ENCODE measurements at regions of chr6 and their contacts with region 1.

Region 1: DNA sequence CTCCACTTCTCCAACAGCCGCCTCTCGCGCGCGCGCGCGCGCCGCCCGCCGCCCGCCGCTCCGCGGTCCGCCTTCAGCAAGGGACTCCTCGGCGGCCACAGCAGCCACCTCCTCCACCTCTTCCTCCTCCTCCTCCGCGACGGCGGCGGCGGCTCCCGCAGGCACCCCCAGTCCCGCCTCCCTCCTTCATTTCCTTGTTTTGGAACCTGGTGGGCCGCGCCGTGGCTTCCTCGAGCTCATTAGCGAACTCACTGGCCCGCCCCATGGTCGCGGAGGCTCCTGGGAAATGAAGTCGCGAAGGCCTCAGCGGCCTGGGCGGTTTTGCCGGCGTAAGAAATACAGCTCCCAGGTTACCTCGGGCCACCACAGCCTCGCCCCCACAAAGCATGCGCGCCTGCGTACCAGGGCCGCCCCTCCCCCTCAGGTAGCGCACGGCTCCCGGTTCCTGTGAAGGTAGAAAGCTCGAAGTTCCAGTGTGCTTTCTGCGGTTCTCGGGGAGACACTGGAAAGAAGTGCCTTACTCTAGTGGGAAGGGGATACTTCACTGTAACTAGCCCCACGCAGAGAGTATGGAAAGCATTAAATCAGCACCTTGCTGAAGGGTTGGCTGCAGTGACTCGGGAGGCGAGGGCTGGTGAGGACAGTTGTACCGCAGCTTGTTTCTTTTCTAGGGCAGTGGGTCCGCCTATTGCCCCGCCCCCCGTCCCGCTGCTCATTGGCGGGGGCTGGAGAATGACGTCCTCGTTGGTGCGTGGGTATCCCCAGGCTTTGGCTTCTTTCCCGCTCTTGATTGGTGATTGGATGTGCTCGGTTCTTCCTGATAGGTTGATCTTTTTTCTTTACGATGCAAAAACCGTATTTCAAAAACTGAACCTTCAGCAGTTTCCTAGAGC is at the start of gene CDK19:
- DNase-seq: peak; percentile 97 to 98
- H3K4me3 ChIP-seq: peak within 1 kb of the TSS; percentile 99
- H3K4me3 Mint-ChIP-seq: peak within 1 kb of the TSS; percentile 100
- H3K27ac Mint-ChIP-seq: peak within 1 kb of the TSS; percentile 100
- H3K4me1 ChIP-seq: peaks cover 14% of the 10 kb centered on the region; the same call in 1 of the 2 replicates
- H3K4me1 Mint-ChIP-seq: peaks cover 20% of the 10 kb centered on the region
- H3K27me3 ChIP-seq: no peaks in the 10 kb centered on the region
- H3K27me3 Mint-ChIP-seq: no peaks in the 10 kb centered on the region
- CTCF ChIP-seq: no peak
- total RNA-seq, gene CDK19: 23.1 and 24.6 TPM in 2 replicates

Region 2: DNA sequence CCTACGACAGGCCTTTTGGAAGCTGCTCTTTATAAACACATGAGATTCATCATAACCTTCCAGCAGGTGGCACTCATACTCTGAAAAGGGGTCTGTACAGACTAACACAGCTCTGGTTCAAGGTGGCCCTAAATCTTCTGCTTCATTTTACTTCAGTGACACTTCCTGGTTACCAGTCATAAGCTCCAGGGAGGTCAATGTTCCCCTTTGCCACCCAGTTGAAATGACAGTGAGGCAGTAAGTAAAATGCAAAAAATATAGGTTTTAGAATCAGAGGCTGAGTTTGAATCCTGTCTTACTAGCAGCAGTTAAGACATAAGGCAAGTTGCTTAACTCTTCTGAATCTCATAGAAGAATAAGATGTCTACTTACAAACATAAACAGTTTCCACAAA is 133.0 kb before region 1 on chr6:
- CTCF ChIA-PET with region 1: interaction called, 10 read pairs
- POLR2A ChIA-PET with region 1: interaction called, 10 read pairs
- intact Hi-C with region 1: loop called (anchors 5 kb)
- DNase-seq: peak; percentile 71 to 77
- H3K4me3 ChIP-seq: no peak overlapping the region
- H3K4me3 Mint-ChIP-seq: no peak overlapping the region
- H3K27ac Mint-ChIP-seq: peak overlapping the region; percentile 72
- H3K4me1 ChIP-seq: peaks cover 14% of the 10 kb centered on the region
- H3K4me1 Mint-ChIP-seq: peaks cover 12% of the 10 kb centered on the region
- H3K27me3 ChIP-seq: no peaks in the 10 kb centered on the region
- H3K27me3 Mint-ChIP-seq: no peaks in the 10 kb centered on the region
- CTCF ChIP-seq: peak; percentile 68 to 69

Region 3: GRCh38 chr6:110826236-110827129 is 11.0 kb after region 1 on chr6:
- CTCF ChIA-PET with region 1: no interaction called
- POLR2A ChIA-PET with region 1: interaction called, 11 read pairs
- intact Hi-C with region 1: no loop called
- DNase-seq: peak; percentile 36 to 38
- H3K4me3 ChIP-seq: no peak overlapping the region
- H3K4me3 Mint-ChIP-seq: no peak overlapping the region
- H3K27ac Mint-ChIP-seq: peak overlapping the region; percentile 42
- H3K4me1 ChIP-seq: peaks cover 27% of the 10 kb centered on the region
- H3K4me1 Mint-ChIP-seq: peaks cover 16% of the 10 kb centered on the region
- H3K27me3 ChIP-seq: no peaks in the 10 kb centered on the region
- H3K27me3 Mint-ChIP-seq: no peaks in the 10 kb centered on the region
- CTCF ChIP-seq: no peak

Region 4: DNA sequence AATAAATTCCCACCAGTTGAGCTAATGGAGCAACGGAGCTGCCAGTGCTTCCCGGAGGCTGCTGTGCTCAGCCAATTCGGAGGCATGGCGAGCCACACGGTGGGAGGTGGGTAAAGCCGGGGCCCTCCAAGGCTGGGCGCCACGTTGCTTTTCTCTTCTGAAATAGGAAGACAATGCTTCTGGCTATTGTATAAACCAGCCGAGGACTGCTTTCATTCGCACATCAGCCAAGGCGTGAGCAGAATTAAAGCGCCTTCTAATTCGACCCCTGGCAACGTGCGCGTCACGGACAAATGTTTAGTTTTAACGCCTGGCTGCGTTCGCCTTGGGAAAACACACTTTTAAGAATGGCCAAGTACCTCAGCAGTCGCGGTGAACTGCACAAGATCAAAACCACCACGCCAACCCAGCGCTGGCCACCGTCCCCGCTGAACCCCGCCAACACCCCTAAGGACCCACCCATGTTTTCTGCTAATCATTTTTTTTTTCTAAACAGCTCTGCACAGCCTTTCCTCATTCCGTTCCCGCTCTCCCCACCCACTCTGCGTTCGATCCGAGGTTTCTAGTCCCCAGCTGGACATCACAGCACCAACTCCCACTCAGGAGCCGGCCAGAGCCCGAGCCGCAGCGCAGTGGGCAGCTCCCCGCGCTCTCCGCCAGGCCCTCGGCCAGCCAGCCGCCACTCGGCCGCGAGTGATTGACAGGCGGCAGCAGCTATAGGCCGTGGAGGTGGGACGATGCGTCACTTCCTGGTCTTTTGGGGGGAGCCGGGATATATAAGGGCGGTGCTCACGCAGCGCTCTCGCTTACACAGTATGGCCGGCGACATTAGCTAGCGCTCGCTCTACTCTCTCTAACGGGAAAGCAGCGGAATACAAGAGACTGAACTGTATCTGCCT is 58.8 kb after region 1 on chr6 and contains the start of gene AMD1:
- CTCF ChIA-PET with region 1: interaction called, 7 read pairs
- POLR2A ChIA-PET with region 1: interaction called, 200 read pairs
- intact Hi-C with region 1: loop called (anchors 1 kb)
- DNase-seq: peak; percentile 97
- H3K4me3 ChIP-seq: peak within 1 kb of the TSS; percentile 93
- H3K4me3 Mint-ChIP-seq: peak within 1 kb of the TSS; percentile 98
- H3K27ac Mint-ChIP-seq: peak within 1 kb of the TSS; percentile 95
- H3K4me1 ChIP-seq: peaks cover 33% of the 10 kb centered on the region
- H3K4me1 Mint-ChIP-seq: peaks cover 18% of the 10 kb centered on the region
- H3K27me3 ChIP-seq: no peaks in the 10 kb centered on the region
- H3K27me3 Mint-ChIP-seq: no peaks in the 10 kb centered on the region
- CTCF ChIP-seq: no peak
- total RNA-seq, gene AMD1: 84.0 and 90.0 TPM in 2 replicates

Region 5: GRCh38 chr6:110949679-110950285 is 134.3 kb after region 1 on chr6:
- CTCF ChIA-PET with region 1: no interaction called
- POLR2A ChIA-PET with region 1: interaction called, 12 read pairs
- intact Hi-C with region 1: loop called (anchors 1 kb)
- DNase-seq: no peak
- H3K4me3 ChIP-seq: no peak overlapping the region
- H3K4me3 Mint-ChIP-seq: no peak overlapping the region
- H3K27ac Mint-ChIP-seq: no peak overlapping the region
- H3K4me1 ChIP-seq: peaks cover 29% of the 10 kb centered on the region
- H3K4me1 Mint-ChIP-seq: peaks cover 31% of the 10 kb centered on the region
- H3K27me3 ChIP-seq: no peaks in the 10 kb centered on the region
- H3K27me3 Mint-ChIP-seq: no peaks in the 10 kb centered on the region
- CTCF ChIP-seq: peak; percentile 37 to 43